HCT116 (cell line): ENCODE measurements at regions of chr9 and their contacts with region 1.

Region 1: DNA sequence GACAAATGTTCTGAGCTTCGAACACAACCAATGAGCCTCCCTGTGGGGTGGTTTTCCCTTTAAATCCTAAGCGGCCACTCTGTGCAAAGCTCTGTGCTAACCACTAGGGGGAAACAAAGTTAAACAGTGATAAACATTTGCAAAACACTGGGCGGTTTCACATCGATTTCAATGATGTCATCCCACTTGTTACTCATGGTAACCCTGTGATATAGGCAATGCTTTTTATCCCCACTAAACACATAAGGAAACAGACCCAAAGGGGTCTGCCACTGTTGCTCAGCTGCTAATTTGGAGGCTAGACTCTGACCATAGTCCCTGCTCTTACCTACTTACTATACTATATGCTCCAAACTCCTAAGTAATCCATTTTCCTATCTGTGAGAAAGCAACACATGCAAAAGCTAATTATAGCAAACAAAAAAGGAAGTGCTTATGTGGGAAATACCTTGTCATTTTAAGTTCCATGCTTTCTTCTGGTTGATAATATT is 57.3 kb downstream of the PTPN3 start:
- DNase-seq: peak; percentile 67
- ATAC-seq: peak; percentile 95
- H3K4me3 ChIP-seq: no peak overlapping the region
- H3K27ac ChIP-seq: no peak overlapping the region
- H3K4me1 ChIP-seq: peaks cover 0 to 8% of the 10 kb centered on the region in 2 experiments; a peak in 2 of 4 replicates
- H3K27me3 ChIP-seq: no peaks in the 10 kb centered on the region
- CTCF ChIP-seq: peak; percentile 77 to 81 (median 79)
- POLR2A ChIP-seq: no peak
- RAD21 ChIP-seq: peak; percentile 85

Region 2: GRCh38 chr9:109453210-109453842 is 12.5 kb after region 1 on chr9:
- CTCF ChIA-PET with region 1: interaction called, 10 read pairs
- POLR2A ChIA-PET with region 1: no interaction called
- RAD21 ChIA-PET with region 1: no interaction called
- intact Hi-C with region 1: no loop called
- DNase-seq: no peak
- ATAC-seq: no peak
- H3K4me3 ChIP-seq: no peak overlapping the region
- H3K27ac ChIP-seq: no peak overlapping the region
- H3K4me1 ChIP-seq: no peaks in the 10 kb centered on the region
- H3K27me3 ChIP-seq: no peaks in the 10 kb centered on the region
- CTCF ChIP-seq: no peak
- POLR2A ChIP-seq: no peak
- RAD21 ChIP-seq: no peak

Region 3: GRCh38 chr9:109652964-109653363 is 212.1 kb after region 1 on chr9:
- CTCF ChIA-PET with region 1: no interaction called
- POLR2A ChIA-PET with region 1: no interaction called
- RAD21 ChIA-PET with region 1: no interaction called
- intact Hi-C with region 1: loop called (anchors 10 kb)
- DNase-seq: no peak
- ATAC-seq: peak; percentile 73
- H3K4me3 ChIP-seq: no peak overlapping the region
- H3K27ac ChIP-seq: no peak overlapping the region
- H3K4me1 ChIP-seq: peaks cover 0 to 3% of the 10 kb centered on the region in 2 experiments; a peak in 1 of 4 replicates
- H3K27me3 ChIP-seq: peaks cover 24% of the 10 kb centered on the region; the same call in 1 of the 2 replicates
- CTCF ChIP-seq: peak; percentile 47 to 51 (median 48); a peak in 5 of 6 replicates
- POLR2A ChIP-seq: no peak
- RAD21 ChIP-seq: peak; percentile 68